Left colon (tissue), 2 donors: ENCODE measurements at regions of chr1 and their contacts with region 1.

Region 1: GRCh38 chr1:202311875-202312635 is 29.7 kb downstream of the UBE2T start:
- DNase-seq: no peak
- ATAC-seq: no peak

Region 2: GRCh38 chr1:202192770-202193613 is 119.1 kb before region 1 on chr1:
- intact Hi-C with region 1: loop called (anchors 5 kb)
- DNase-seq: peak; percentile 45 to 71
- ATAC-seq: peak; percentile 59

Region 3: GRCh38 chr1:202199265-202199889 is 112.7 kb before region 1 on chr1:
- intact Hi-C with region 1: loop called (anchors 5 kb)
- DNase-seq: peak; percentile 62 to 79
- ATAC-seq: peak; percentile 81

Region 4: DNA sequence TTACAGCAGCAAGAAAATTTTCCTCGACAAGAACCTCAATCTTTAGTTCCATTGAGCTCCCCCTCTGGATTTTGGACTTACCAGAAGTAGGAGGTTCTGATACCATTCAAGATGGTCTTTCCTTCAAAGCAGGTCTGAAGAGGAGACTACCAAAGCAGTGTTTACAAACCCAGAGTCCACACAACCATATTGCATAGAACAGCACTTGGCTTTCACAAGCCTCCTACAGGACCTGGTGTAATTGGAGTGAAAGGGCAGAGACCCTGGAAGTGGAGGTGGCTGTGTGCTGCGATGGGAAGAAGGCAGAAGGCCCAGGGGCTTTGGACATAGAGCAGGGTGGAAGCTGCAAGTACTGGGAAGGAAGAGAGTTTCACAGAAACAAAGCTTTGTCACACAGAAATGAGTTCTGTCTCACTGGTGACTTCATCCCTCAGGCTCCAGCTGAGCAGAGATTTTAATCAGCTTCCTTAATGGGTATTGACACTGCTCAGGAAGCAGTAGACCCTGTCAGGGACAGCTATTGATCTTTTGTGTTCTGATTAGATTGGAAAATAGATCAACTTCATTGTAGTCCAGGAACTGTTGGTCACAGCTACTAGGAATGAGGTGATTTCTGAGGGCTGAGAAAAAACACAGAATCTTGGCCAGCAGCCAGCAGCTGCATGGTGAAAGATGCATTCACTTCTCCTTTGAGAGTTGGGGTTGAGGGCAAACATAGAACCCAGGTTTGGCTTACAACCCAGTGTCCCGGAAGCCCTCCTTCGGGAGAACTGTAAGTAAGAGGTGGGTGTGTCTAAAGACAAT is 274.2 kb after region 1 on chr1:
- intact Hi-C with region 1: no loop called
- DNase-seq: peak in 1 of 2 donors; percentile 31
- ATAC-seq: no peak